Activated CD4-positive, alpha-beta memory T cell treated with anti-CD3 and anti-CD28 coated beads for 36 hours (primary cell): ENCODE measurements at regions of chr11 and their contacts with region 1.

Region 1: GRCh38 chr11:65859200-65859811 is 927 bp upstream of the MUS81 start:
- DNase-seq: peak; percentile 99
- H3K4me3 Mint-ChIP-seq: peak overlapping the region; percentile 98
- H3K27ac Mint-ChIP-seq: peak overlapping the region; percentile 99
- H3K4me1 Mint-ChIP-seq: peaks cover 42% of the 10 kb centered on the region
- H3K27me3 Mint-ChIP-seq: no peaks in the 10 kb centered on the region

Region 2: DNA sequence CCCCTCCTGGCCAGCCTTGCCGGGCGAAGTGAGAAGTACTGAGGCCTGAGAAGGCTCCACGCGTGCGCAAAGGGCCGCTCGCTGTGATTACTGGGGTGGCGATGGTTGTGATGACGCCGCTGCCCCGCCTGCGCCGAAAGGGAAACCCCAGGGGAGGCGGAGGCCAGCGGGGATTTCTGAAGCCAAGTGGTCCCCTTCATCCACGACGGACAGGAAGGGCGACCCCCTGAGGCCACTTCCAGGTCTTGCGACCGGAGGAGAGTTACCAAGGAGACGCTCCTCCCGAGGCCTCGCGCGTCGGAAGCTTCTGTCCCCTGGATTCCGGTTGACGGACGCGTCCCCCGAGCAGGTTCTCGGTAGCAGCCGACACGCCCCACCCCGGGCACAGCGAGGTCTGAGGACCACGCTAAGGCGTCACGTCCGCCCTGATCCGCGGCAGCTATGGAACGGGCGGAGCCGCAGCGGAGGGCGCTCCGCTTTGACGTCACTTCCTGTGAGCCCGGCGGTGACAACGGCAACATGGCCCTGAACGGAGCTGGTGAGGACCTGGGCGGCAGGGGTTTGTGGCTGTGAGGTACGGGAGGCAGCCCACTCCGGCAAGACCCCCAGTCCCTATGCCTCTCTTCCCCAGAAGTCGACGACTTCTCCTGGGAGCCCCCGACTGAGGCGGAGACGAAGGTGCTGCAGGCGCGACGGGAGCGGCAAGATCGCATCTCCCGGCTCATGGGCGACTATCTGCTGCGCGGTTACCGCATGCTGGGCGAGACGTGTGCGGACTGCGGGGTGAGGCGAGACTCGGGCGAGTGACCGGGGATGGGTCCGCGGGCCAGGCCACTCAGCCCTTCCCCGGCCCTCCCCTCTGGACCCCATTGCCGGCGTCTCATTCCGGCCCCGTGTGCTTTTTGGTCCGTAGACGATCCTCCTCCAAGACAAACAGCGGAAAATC is 289.1 kb before region 1 on chr11 and contains the start of gene ZNRD2:
- CTCF ChIA-PET with region 1: interaction called, 3 read pairs
- POLR2A ChIA-PET with region 1: interaction called, 3 read pairs
- intact Hi-C with region 1: loop called (anchors 2 kb)
- DNase-seq: peak; percentile 100
- H3K4me3 Mint-ChIP-seq: peak within 1 kb of the TSS; percentile 100
- H3K27ac Mint-ChIP-seq: peak within 1 kb of the TSS; percentile 95
- H3K4me1 Mint-ChIP-seq: peaks cover 62% of the 10 kb centered on the region
- H3K27me3 Mint-ChIP-seq: no peaks in the 10 kb centered on the region
- total RNA-seq, gene ZNRD2: 48.1 to 51.1 TPM

Region 3: GRCh38 chr11:65680192-65680743 is 179.0 kb before region 1 on chr11:
- CTCF ChIA-PET with region 1: no interaction called
- POLR2A ChIA-PET with region 1: no interaction called
- intact Hi-C with region 1: no loop called
- DNase-seq: no peak
- H3K4me3 Mint-ChIP-seq: no peak overlapping the region
- H3K27ac Mint-ChIP-seq: no peak overlapping the region
- H3K4me1 Mint-ChIP-seq: no peaks in the 10 kb centered on the region
- H3K27me3 Mint-ChIP-seq: peaks cover 5% of the 10 kb centered on the region

Region 4: DNA sequence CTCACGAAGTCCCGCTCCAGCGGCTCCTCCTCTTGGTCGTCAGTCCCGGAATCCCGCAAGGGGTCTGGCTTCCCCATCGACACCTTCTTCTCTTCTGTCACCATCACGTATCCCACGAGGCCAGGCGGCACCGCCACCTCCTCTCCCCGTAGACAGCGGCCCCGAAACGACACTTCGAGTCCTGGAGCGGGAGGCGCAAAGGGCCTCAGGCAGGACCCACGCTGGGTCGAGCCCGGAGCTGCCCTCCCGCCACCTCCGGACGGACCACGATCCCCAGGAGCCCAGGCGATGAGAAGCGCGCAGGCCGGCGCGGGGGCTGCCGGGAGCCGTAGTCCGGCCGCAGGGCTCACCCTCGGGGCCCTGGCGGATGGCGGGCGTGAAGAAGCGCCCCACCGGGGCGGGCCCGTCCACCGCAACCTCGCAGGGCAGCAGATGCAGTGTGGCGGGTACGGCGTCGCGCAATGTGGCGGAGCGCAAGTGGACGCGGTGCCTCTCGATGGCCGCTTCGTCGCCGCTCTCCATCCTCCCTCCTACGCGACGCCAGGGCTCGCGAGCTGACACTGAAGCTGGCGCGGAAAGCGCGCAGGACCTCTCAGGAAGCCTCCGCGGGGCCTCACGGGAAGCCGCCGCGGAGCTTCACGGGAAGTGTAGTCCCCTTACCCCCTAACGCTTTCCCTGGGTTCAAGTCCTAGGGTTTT is 138.9 kb before region 1 on chr11 and contains the start of gene RNASEH2C:
- CTCF ChIA-PET with region 1: interaction called, 11 read pairs
- POLR2A ChIA-PET with region 1: no interaction called
- intact Hi-C with region 1: no loop called
- DNase-seq: peak; percentile 89
- H3K4me3 Mint-ChIP-seq: peak within 1 kb of the TSS; percentile 98
- H3K27ac Mint-ChIP-seq: peak within 1 kb of the TSS; percentile 85
- H3K4me1 Mint-ChIP-seq: peaks cover 24% of the 10 kb centered on the region
- H3K27me3 Mint-ChIP-seq: no peaks in the 10 kb centered on the region
- total RNA-seq, gene RNASEH2C: 98.4 to 105 TPM

Region 5: DNA sequence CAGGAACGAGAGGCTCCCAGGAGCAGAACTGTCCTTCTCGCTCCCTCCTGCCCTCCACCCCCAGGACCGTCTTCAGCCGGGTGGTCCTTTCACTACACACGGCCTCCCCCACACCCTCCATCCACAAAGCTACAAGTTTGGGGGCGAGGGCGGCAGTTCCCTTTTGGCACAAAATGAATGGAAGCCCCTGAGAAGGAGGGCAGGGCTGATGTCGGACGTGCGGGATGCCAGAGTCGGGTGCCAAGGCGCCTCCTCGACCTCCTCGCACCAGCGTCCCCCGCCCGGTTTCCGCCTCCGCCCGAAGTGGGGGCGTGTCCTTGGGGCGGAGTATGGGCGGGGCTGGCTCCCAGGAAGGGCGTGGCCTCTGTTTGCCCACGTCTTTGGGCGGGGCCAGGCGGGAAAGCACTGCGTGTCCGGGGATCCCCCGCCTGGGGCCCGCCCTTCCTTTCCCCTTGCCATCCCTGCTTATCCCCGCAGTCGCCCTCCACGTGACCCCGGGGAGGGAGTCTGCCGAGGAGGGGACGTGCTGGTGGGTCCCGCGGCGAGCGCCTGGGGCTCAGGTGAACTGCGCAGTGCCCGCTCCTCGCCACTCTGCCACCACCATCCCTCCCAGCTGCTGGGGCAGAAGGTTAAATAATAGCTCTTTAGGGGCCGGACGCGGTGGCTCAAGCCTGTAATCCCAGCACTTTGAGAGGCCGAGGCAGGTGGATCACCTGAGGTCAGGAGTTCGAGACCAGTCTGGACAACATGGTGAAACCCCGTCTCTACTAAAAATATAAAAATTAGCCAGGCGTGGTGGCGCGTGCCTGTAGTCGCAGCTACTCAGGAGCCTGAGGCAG is 14.2 kb after region 1 on chr11:
- CTCF ChIA-PET with region 1: interaction called, 33 read pairs
- POLR2A ChIA-PET with region 1: interaction called, 56 read pairs
- intact Hi-C with region 1: loop called (anchors 2 kb)
- DNase-seq: peak; percentile 98
- H3K4me3 Mint-ChIP-seq: peak overlapping the region; percentile 85
- H3K27ac Mint-ChIP-seq: peak overlapping the region; percentile 81
- H3K4me1 Mint-ChIP-seq: peaks cover 20% of the 10 kb centered on the region
- H3K27me3 Mint-ChIP-seq: no peaks in the 10 kb centered on the region

Region 6: DNA sequence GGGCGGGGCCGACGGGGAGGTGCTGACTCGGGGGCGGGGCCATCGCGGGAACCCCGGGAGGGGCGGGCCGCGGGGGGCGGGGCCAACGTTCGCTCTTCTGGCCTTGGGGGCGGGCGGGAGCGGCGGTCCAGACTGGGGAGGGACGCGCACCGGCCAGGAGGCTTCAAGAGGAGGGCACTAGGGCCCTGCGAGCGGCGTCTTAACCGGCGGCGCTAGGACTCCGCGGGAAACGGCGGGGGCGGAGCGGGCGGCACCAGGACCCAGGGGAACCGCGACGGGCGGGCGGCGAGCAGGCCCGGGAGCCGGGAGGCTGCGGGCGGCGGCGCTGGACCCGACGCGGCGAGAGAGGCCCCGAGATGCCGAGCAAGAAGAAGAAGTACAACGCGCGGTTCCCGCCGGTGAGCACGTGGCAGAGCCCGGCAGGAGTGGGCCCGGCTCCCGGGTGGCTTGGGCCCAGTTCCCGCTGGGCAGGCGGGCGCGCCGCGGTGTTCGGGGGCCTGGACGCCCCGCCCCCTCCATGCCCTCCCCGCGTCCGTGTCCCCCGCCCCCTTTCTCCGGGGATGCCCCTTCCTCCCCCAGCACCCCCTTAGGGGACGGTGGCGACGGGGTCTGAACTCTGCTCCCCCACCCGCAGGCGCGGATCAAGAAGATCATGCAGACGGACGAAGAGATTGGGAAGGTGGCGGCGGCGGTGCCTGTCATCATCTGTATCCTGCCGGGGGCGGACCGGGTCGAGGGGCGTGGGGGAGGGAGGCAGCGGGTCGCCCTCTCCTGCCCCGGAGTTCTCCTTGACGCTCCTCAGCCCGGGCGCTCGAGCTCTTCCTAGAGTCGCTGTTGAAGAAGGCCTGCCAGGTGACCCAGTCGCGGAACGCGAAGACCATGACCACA is 60.1 kb after region 1 on chr11 and contains the start of gene DRAP1:
- CTCF ChIA-PET with region 1: interaction called, 5 read pairs
- POLR2A ChIA-PET with region 1: interaction called, 3 read pairs
- intact Hi-C with region 1: loop called (anchors 1 kb)
- DNase-seq: peak; percentile 99
- H3K4me3 Mint-ChIP-seq: peak within 1 kb of the TSS; percentile 90
- H3K27ac Mint-ChIP-seq: peak within 1 kb of the TSS; percentile 84
- H3K4me1 Mint-ChIP-seq: peaks cover 33% of the 10 kb centered on the region
- H3K27me3 Mint-ChIP-seq: no peaks in the 10 kb centered on the region
- total RNA-seq, gene DRAP1: 154 to 169 TPM

Region 7: GRCh38 chr11:66001942-66002647 is 142.8 kb after region 1 on chr11 and contains the starts of genes BANF1 and EIF1AD:
- CTCF ChIA-PET with region 1: interaction called, 6 read pairs
- POLR2A ChIA-PET with region 1: interaction called, 6 read pairs
- intact Hi-C with region 1: loop called (anchors 1 kb)
- DNase-seq: peak; percentile 97
- H3K4me3 Mint-ChIP-seq: peak within 1 kb of the TSS; percentile 99
- H3K27ac Mint-ChIP-seq: peak within 1 kb of the TSS; percentile 99
- H3K4me1 Mint-ChIP-seq: peaks cover 38% of the 10 kb centered on the region
- H3K27me3 Mint-ChIP-seq: no peaks in the 10 kb centered on the region
- total RNA-seq, gene BANF1: 264 to 280 TPM
- total RNA-seq, gene EIF1AD: 41.2 to 42.7 TPM